ENCODE measurements at regions of chr14 and their contacts with region 1.

Region 1: DNA sequence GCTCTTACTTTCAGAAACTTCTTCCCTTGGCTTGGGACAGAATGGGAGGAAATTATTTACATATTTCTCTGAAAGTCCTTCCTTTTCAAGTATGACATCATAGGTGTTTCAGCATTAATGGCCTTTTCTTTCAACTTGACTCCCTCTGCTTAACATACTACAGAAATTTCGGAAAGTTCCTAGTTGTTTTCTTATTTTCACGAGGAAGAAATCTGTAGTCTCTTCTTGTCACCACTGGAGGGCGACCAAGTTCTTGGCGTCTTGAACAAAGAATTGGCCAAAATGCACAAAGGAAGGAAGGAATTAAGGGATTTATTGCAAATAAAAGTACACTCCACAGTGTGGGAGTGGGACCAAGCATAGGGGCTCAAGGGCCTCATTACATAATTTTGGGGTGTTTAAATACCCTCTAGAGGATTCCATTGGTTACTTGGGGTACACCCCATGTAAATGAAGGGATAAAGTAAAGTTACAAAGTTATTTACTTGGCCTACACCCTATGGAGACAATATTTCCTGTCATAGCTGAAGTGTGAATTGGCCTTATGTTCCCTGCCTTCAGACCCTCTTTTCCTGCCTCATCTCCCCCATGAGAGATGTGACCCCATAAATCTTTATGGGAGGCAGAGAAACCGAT is 70.4 kb downstream of the RPL10L start:
- DNase-seq: peak in 1 of 2 experiments; percentile 67
- ATAC-seq: peak in 1 of 2 experiments; percentile 50; a peak in 3 of 6 replicates
- H3K4me3 ChIP-seq: no peak overlapping the region
- H3K27ac ChIP-seq: no peak overlapping the region
- H3K4me1 ChIP-seq: 0 out of 3 replicates have a peak, but pooled peaks cover 3% of the 10 kb centered on the region
- CTCF ChIP-seq: peak; percentile 57
- EP300 ChIP-seq: no peak
- POLR2A ChIP-seq: no peak
- RAD21 ChIP-seq: peak; percentile 71 to 78

Region 2: GRCh38 chr14:46540986-46541385 is 40.2 kb before region 1 on chr14:
- CTCF ChIA-PET with region 1: no interaction called
- POLR2A ChIA-PET with region 1: no interaction called
- DNase-seq: no peak
- ATAC-seq: no peak
- H3K4me3 ChIP-seq: no peak overlapping the region
- H3K27ac ChIP-seq: no peak overlapping the region
- H3K4me1 ChIP-seq: no peaks in the 10 kb centered on the region
- CTCF ChIP-seq: no peak
- EP300 ChIP-seq: no peak
- POLR2A ChIP-seq: no peak
- RAD21 ChIP-seq: no peak

Region 3: DNA sequence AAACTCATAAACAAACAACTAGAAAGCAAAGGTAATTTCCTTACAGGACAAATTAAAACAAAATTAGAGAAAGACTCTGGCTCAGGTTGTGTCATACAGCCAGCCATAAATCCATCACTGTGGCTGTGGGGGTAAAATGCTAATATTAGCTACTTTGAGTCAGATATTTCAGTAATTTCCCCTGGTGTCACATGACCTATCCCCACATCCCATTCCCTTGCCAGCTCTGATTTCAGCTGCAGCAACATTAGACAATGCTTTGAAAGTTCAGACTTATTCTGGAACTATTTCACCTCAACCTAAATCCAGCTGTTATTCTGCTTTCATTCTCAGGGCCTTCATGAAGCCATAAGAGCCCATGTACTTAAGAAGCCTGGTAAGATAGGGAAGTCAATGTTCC is 15.1 kb after region 1 on chr14:
- CTCF ChIA-PET with region 1: interaction called, 14 read pairs
- POLR2A ChIA-PET with region 1: no interaction called
- DNase-seq: no peak
- ATAC-seq: no peak
- H3K4me3 ChIP-seq: no peak overlapping the region
- H3K27ac ChIP-seq: no peak overlapping the region
- H3K4me1 ChIP-seq: peaks cover 5% of the 10 kb centered on the region; the same call in 1 of the 3 replicates
- CTCF ChIP-seq: no peak
- EP300 ChIP-seq: no peak
- POLR2A ChIP-seq: no peak
- RAD21 ChIP-seq: no peak